Mammary epithelial cell (primary cell): ENCODE measurements at regions of chr6 and their contacts with region 1.

Region 1: GRCh38 chr6:79949233-79949632 is 1.9 kb upstream of the ELOVL4 start:
- DNase-seq: peak; percentile 56
- H3K4me3 ChIP-seq: no peak overlapping the region
- H3K27ac ChIP-seq: no peak overlapping the region
- H3K4me1 ChIP-seq: peaks cover 18% of the 10 kb centered on the region
- H3K27me3 ChIP-seq: no peaks in the 10 kb centered on the region
- CTCF ChIP-seq: peak; percentile 23 to 51

Region 2: DNA sequence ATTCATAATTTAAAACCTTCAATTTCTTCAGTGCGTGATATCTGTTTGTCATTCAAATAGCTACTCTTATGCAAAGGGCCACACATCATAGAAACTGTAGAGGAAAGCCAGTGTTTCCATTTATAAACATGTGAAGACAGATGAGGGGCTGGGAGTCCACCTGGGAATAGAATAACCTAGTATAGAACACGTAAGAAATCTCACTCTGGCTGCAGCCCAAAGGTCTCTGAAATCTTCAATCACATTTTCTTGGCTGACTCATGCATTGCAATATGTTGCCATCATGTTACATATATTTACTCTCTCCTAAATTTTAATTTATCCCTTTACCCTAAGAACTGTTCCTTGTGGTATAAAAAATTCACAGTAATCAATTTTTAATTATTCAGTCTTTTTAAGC is 125.0 kb before region 1 on chr6:
- CTCF ChIA-PET with region 1: no interaction called
- dilution Hi-C with region 1: no loop called
- in situ Hi-C with region 1: no loop called
- intact Hi-C with region 1: no loop called
- DNase-seq: peak; percentile 12
- H3K4me3 ChIP-seq: no peak overlapping the region
- H3K27ac ChIP-seq: no peak overlapping the region
- H3K4me1 ChIP-seq: no peaks in the 10 kb centered on the region
- H3K27me3 ChIP-seq: no peaks in the 10 kb centered on the region
- CTCF ChIP-seq: no peak

Region 3: GRCh38 chr6:79971195-79971594 is 22.0 kb after region 1 on chr6:
- CTCF ChIA-PET with region 1: interaction called, 14 read pairs
- dilution Hi-C with region 1: no loop called
- in situ Hi-C with region 1: no loop called
- intact Hi-C with region 1: no loop called
- DNase-seq: no peak
- H3K4me3 ChIP-seq: no peak overlapping the region
- H3K27ac ChIP-seq: no peak overlapping the region
- H3K4me1 ChIP-seq: no peaks in the 10 kb centered on the region
- H3K27me3 ChIP-seq: no peaks in the 10 kb centered on the region
- CTCF ChIP-seq: no peak

Region 4: DNA sequence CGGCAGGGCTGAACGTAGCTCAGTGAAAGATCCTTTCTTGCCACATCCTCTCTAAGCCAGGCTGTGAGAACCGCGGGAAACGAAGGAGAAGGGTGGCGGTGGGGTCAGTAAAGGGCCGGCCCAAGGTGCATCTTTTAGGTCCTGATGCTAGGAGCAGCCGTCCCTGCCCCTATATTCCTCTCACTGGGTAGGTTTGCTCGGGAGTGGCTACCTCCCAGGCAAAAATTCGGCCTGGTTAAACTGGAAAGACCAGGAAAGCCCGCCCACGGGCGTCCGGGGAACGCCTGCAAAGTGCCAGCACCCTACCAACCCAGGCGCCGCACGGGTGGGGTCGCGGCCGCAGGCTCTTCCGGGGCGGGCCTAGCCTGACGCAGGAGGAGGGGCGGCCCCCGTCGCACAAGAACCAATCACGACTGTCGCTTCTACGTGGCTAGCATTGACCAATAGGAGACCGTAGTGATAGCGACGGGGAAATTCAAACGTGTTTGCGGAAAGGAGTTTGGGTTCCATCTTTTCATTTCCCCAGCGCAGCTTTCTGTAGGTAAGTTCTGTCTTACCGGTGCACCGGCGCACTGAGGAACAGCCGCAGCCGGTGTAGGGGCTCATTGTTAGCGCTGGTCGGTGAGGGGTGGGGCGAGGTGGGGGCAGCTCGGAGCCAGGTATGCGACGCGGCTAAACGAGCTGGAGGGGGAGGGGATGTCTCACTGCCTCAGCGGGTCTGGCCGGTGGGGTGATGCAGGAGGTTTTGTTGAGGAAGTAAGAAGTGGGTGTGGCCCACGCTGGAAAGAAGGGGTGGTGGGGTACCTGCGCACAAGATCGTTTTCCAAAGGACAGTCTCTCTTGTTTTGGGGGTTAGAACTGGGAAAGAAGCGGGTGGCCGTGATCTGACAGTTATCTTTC is 55.2 kb after region 1 on chr6 and contains the start of gene TTK:
- CTCF ChIA-PET with region 1: no interaction called
- dilution Hi-C with region 1: no loop called
- in situ Hi-C with region 1: no loop called
- intact Hi-C with region 1: loop called (anchors 1 kb)
- DNase-seq: peak; percentile 96
- H3K4me3 ChIP-seq: peak within 1 kb of the TSS; percentile 54 to 95 (median 76)
- H3K27ac ChIP-seq: peak within 1 kb of the TSS; percentile 71
- H3K4me1 ChIP-seq: peaks cover 9% of the 10 kb centered on the region
- H3K27me3 ChIP-seq: no peaks in the 10 kb centered on the region
- CTCF ChIP-seq: no peak
- total RNA-seq, gene TTK: 1.8 to 15.9 TPM